Adrenal gland (tissue), 19 donors: ENCODE measurements at regions of chr2 and their contacts with region 1.

Region 1: GRCh38 chr2:38462109-38462759 is 85.2 kb upstream of the ATL2 start:
- DNase-seq: peak; percentile 53 to 78 (median 70)
- H3K4me3 ChIP-seq: no peak overlapping the region
- H3K27ac ChIP-seq: no peak overlapping the region
- H3K4me1 ChIP-seq: peaks cover 0 to 7% of the 10 kb centered on the region in 2 donors
- H3K27me3 ChIP-seq: no peaks in the 10 kb centered on the region
- CTCF ChIP-seq: no peak
- POLR2A ChIP-seq: no peak

Region 2: GRCh38 chr2:38323623-38324022 is 138.6 kb before region 1 on chr2:
- intact Hi-C with region 1: loop called in 1 of 2 experiments (anchors 5 kb)
- DNase-seq: peak; percentile 46 to 88 (median 82)
- H3K4me3 ChIP-seq: no peak overlapping the region
- H3K27ac ChIP-seq: peak overlapping the region in 3 of 5 donors; percentile 14 to 39 (median 24)
- H3K4me1 ChIP-seq: peaks cover 10 to 24% of the 10 kb centered on the region in 2 donors
- H3K27me3 ChIP-seq: no peaks in the 10 kb centered on the region
- CTCF ChIP-seq: no peak
- POLR2A ChIP-seq: no peak

Region 3: GRCh38 chr2:38352336-38352735 is 109.9 kb before region 1 on chr2:
- intact Hi-C with region 1: no loop called
- DNase-seq: peak in 1 of 7 donors; percentile 25
- H3K4me3 ChIP-seq: no peak overlapping the region
- H3K27ac ChIP-seq: peak overlapping the region in 2 of 5 donors; percentile 20 to 27
- H3K4me1 ChIP-seq: peaks cover 10 to 19% of the 10 kb centered on the region in 2 donors
- H3K27me3 ChIP-seq: no peaks in the 10 kb centered on the region
- CTCF ChIP-seq: no peak
- POLR2A ChIP-seq: no peak